GM10248 (cell line): ENCODE measurements at regions of chr3 and their contacts with region 1.

Region 1: GRCh38 chr3:3200632-3201212 is 21.2 kb upstream of the CRBN start:
- DNase-seq: peak; percentile 29
- CTCF ChIP-seq: peak; percentile 78

Region 2: GRCh38 chr3:3237979-3238378 is 37.3 kb after region 1 on chr3:
- CTCF ChIA-PET with region 1: interaction called, 10 read pairs
- POLR2A ChIA-PET with region 1: no interaction called
- DNase-seq: no peak
- CTCF ChIP-seq: no peak

Region 3: DNA sequence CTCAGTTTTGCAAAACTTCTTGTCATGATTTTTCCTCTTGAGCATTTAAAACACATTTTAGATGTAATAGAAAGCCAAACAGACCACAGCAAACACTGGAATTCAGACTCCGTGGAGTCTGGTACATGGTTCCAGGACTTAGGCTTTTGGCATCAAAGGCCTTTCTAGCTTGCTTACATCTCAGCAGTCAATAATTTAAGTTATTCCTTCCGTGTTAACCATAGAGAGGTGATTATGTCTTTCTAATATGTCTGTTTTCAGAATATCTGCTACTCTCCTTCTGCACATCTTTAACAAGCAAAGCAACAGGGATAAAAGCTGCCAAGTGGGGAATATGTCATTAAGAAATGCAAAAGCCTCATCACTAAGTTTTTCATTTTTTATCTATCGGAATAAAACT is 150.5 kb after region 1 on chr3:
- CTCF ChIA-PET with region 1: no interaction called
- POLR2A ChIA-PET with region 1: no interaction called
- DNase-seq: no peak
- CTCF ChIP-seq: no peak

Region 4: DNA sequence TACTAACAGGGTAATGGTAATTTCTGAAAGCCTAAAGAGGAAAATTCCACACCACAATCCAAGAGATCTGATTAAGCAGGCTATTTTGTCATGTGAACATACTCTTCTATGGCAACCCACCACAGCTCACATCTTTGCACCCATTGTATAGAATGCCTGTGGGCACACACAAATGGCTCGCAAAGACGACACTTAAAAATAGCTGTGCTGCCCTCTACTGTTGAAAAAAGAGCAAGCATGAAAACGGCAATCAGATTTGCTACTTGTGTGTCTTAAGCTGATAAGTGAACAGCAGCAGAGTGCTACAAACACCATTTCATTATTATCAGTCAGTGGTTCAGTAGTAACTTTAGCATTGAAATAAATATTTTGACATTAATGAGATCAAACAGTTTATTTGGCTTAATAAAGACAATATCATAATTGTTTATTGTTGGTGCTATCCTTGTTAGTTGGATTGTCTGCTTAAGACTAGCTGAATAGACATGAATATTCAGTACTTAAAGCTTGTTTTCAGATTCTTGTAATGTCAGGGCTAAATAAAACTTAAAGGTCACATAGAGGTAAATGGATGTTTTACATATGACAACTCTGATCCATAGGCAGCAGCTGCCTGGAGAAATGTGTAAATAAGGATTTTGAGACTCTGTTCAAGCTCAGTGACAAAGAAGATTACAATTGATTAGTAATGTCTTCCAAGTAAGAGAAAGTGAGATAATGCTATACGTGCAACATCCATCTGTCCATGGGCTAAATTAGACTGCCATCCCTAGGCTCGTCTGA is 797.6 kb after region 1 on chr3:
- CTCF ChIA-PET with region 1: interaction called, 104 read pairs
- POLR2A ChIA-PET with region 1: no interaction called
- DNase-seq: peak; percentile 24
- CTCF ChIP-seq: peak; percentile 67

Region 5: DNA sequence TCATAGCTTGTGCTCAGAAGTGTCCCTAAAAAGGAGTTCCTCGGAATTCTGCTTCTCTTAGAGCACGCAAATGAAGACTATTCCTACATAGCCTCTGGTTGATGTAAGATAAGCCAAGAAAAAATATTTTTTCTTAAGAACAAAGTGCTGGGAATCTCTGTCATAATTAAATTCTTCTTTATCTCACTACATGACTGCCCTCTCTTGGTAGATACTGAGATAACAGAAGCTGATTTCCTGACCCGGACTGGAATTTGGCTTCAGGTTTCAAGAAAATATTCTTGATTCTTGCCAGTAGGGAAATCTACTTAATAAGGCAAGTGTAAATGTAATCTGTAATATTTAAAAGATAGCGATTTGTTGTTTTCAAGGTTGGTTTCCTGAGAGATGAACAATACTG is 1071.1 kb after region 1 on chr3:
- CTCF ChIA-PET with region 1: interaction called, 19 read pairs
- POLR2A ChIA-PET with region 1: no interaction called
- DNase-seq: peak; percentile 17
- CTCF ChIP-seq: peak; percentile 28

Region 6: DNA sequence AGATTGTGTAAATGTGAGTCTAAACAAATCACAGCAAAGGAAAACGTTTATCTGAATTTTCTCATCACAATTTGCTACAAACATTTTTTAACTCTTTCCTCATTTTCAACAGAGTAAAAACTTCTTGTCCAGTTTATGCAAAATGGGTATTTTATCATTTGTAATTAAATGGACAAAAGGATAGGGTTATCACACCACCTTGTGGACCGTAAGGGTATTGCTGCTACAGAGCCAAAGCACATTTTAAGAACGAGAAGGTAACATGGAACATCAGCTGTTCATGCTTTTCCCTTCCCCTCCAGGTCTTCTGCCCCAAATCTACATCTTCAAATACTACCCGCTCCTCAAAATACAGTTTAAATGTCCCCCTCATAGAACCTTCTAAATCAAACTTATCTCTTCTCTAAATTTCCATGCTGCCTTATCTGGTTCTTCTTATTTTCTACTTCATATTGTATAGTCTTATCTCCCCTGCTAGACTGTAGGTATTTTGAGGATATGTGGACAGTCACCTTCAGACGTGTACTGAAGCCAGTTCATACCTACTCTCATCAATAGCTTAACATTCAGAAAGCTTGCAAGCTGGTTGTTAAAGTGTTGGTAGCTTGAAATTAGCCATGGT is 1089.7 kb after region 1 on chr3:
- CTCF ChIA-PET with region 1: interaction called, 95 read pairs
- POLR2A ChIA-PET with region 1: no interaction called
- DNase-seq: peak; percentile 18
- CTCF ChIP-seq: peak; percentile 79